Endothelial cell of umbilical vein (primary cell): ENCODE measurements at regions of chr2 and their contacts with region 1.

Region 1: DNA sequence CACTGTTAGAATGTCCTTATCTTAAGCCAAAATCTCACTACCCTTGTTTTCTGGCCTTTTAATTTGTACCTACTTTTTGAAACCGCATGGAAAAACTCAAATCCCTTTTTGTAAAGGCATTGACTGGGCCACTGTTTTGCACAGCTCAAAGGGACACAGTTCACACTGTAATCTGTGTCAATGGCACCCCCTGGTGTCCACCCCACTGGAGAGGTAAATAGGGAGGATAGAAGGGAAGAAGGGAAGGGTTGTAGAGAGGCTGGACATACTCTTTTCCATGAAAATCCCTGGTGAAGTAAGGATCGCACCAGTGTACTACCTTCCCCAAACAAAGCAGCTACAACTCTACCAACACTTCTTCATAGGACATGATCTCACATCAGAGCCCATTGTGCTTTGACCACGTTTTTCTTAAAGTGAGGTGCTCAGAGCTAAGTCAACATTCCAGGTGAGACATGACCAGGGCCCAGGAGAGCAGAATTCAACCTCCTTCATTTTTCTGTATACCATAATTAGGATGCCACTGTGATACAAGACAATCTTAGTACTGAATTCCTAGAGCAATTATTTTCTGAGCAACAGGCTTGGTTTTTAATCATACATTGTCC is 92.4 kb upstream of the RMDN2 start:
- DNase-seq: peak; percentile 85
- H3K4me3 ChIP-seq: no peak overlapping the region
- H3K27ac ChIP-seq: no peak overlapping the region
- H3K4me1 ChIP-seq: peaks cover 30% of the 10 kb centered on the region
- H3K27me3 ChIP-seq: no peaks in the 10 kb centered on the region
- CTCF ChIP-seq: peak; percentile 71 to 77
- POLR2A ChIP-seq: no peak

Region 2: GRCh38 chr2:37402636-37403035 is 430.1 kb before region 1 on chr2:
- CTCF ChIA-PET with region 1: interaction called, 201 read pairs
- POLR2A ChIA-PET with region 1: no interaction called
- dilution Hi-C with region 1: no loop called
- intact Hi-C with region 1: no loop called
- DNase-seq: no peak
- H3K4me3 ChIP-seq: no peak overlapping the region
- H3K27ac ChIP-seq: no peak overlapping the region
- H3K4me1 ChIP-seq: no peaks in the 10 kb centered on the region
- H3K27me3 ChIP-seq: no peaks in the 10 kb centered on the region
- CTCF ChIP-seq: no peak
- POLR2A ChIP-seq: no peak

Region 3: DNA sequence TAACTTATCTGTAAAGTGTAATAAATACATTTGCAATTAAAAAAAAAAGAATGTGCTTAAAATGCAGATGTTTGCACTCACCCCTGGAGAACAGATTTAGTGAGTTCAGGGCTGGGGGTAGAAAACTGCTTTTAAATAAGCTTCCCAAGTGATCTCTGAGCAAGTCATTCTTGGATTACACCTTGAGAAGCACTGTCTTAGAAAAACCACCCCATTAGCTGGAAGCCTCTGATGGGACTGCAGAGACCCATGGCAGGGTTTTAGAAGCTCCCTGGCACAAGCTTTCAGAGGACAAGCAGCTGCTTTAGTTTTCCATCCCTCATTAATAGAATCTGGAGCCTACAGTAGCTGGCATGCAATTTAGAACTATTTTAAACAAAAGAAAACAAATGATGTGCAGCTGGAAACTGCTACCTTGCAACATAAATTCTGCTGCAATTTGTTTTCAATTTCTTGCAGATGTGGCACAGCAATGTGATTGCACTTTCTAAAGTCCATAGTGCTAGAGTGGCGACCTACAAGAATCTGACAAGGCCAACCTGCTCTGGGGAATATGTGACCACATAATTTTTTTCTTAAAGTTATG is 302.8 kb before region 1 on chr2:
- CTCF ChIA-PET with region 1: interaction called, 17 read pairs
- POLR2A ChIA-PET with region 1: no interaction called
- dilution Hi-C with region 1: no loop called
- intact Hi-C with region 1: no loop called
- DNase-seq: no peak
- H3K4me3 ChIP-seq: no peak overlapping the region
- H3K27ac ChIP-seq: no peak overlapping the region
- H3K4me1 ChIP-seq: no peaks in the 10 kb centered on the region
- H3K27me3 ChIP-seq: no peaks in the 10 kb centered on the region
- CTCF ChIP-seq: no peak
- POLR2A ChIP-seq: no peak

Region 4: DNA sequence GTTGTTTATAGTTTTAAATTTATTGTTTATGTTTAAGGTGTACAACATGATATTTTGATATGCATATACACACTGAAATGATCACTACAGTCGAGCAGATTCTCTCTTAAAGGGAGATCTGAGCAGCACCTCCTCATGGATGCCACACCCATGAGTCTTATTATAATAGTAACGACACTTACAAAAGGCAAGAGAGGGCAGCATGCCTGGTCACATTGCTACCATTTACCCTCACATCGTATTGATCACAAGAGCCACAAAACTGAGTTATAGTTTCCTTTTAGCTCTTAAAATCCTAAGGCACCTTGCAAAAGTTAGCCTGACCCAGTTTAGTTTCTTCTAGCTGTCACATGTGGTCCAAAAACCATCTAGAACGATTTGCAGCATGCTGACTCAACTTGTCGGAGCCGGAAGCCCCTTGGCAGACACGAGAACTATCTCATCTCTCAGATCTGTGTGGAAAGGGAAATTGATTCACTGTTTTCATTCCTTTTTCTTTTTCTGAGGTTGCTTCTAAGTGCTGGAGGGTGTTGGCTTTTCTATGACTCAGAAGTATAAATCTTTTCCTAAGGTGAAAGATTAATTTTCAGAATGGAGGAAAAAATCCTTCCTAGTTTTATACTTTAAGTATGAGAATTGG is 246.6 kb before region 1 on chr2:
- CTCF ChIA-PET with region 1: interaction called, 15 read pairs
- POLR2A ChIA-PET with region 1: no interaction called
- dilution Hi-C with region 1: no loop called
- intact Hi-C with region 1: loop called (anchors 2 kb)
- DNase-seq: peak; percentile 96
- H3K4me3 ChIP-seq: no peak overlapping the region
- H3K27ac ChIP-seq: peak overlapping the region; percentile 75
- H3K4me1 ChIP-seq: peaks cover 88% of the 10 kb centered on the region
- H3K27me3 ChIP-seq: no peaks in the 10 kb centered on the region
- CTCF ChIP-seq: no peak
- POLR2A ChIP-seq: no peak

Region 5: DNA sequence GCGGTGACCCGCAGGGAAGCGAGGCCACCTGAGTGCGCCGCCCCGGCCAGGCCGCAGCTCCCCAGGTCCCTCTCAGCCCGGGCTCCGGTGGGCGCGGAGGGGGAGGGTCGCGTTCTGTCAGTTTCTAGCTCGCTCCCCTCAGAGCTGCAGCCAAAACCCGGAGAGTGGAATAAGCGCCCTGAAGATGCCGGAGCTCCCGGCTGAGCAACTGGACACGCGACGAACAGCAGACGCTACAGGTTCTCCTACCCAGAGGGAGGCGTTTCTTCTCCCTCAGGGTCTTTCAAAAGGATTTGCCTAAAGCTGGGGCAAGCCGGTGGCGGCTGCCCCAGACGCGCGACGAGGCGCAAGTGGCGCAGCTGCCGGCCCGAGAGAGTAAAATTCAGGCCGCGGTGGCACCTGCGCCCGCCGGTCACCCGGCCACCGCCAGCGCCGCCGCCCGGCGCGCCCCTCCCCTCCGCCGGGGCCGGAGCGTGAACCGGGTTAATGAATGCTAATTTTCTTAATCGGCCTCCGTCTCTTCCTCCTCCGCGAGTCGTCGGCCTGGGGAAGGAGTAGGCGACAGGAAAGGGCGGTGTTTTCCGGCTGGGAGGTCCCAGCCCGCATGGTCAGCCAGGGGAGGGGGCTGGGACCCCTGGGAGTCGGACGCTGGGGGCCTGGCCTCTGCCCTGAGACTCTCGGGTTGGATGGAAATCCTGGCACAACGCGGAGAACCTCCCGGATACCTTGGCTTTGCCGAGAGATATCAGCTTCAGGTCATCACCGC is 160.4 kb before region 1 on chr2:
- CTCF ChIA-PET with region 1: interaction called, 23 read pairs
- POLR2A ChIA-PET with region 1: interaction called, 4 read pairs
- dilution Hi-C with region 1: no loop called
- intact Hi-C with region 1: loop called (anchors 1 kb)
- DNase-seq: peak; percentile 85
- H3K4me3 ChIP-seq: peak overlapping the region; percentile 59 to 84 (median 67)
- H3K27ac ChIP-seq: peak overlapping the region; percentile 75
- H3K4me1 ChIP-seq: peaks cover 43% of the 10 kb centered on the region
- H3K27me3 ChIP-seq: no peaks in the 10 kb centered on the region
- CTCF ChIP-seq: no peak
- POLR2A ChIP-seq: no peak

Region 6: DNA sequence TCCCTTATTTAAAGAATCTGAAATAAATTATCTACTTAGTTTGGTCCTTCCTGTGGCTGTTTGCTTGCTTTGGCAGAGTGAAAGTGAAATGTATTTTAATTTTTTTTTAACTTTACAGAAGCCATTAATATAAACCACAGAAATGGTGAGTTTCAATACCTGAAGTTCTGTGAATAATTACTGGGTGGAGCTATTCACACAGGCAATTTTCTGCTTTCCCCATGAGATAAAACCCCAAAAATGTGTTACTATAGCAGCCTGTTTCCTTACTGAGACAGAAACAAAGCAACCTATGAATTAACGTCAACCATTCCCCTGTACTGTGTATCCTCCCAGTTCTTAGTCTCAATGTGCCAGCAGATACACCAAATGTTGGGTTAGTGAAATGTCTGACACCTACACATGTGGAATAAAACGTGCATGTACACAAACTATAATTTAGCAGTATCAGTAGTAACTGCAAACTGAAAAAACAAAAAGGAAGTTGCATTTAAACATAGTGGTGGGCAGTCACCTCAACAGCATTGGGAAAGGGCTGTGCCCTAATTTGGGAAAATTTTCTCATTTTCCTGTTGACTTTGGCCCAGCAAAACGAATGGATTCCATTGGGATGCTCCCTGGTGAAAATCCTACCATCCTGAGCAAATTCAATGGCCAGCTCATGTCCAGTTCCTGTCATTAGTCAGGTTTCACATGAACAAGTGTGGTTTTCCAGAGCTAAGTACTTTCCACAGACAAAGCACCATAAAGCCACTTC is 19.3 kb after region 1 on chr2:
- CTCF ChIA-PET with region 1: interaction called, 22 read pairs
- POLR2A ChIA-PET with region 1: no interaction called
- dilution Hi-C with region 1: no loop called
- intact Hi-C with region 1: no loop called
- DNase-seq: no peak
- H3K4me3 ChIP-seq: no peak overlapping the region
- H3K27ac ChIP-seq: no peak overlapping the region
- H3K4me1 ChIP-seq: peaks cover 41% of the 10 kb centered on the region
- H3K27me3 ChIP-seq: no peaks in the 10 kb centered on the region
- CTCF ChIP-seq: no peak
- POLR2A ChIP-seq: no peak

Region 7: GRCh38 chr2:39728941-39729351 is 1896.3 kb after region 1 on chr2:
- CTCF ChIA-PET with region 1: no interaction called
- POLR2A ChIA-PET with region 1: no interaction called
- dilution Hi-C with region 1: no loop called
- intact Hi-C with region 1: no loop called
- DNase-seq: peak; percentile 17
- H3K4me3 ChIP-seq: no peak overlapping the region
- H3K27ac ChIP-seq: no peak overlapping the region
- H3K4me1 ChIP-seq: peaks cover 6% of the 10 kb centered on the region
- H3K27me3 ChIP-seq: peaks cover 0 to 2% of the 10 kb centered on the region in 2 experiments
- CTCF ChIP-seq: peak; percentile 77 to 88
- POLR2A ChIP-seq: no peak